ENCODE measurements at regions of chr15 and their contacts with region 1.

Region 1: GRCh38 chr15:52208306-52208946 is 17.2 kb upstream of the GNB5 start:
- DNase-seq: peak; percentile 64
- H3K27ac ChIP-seq: no peak overlapping the region
- CTCF ChIP-seq: peak; percentile 70

Region 2: GRCh38 chr15:51634591-51635198 is 573.7 kb before region 1 on chr15:
- CTCF ChIA-PET with region 1: no interaction called
- POLR2A ChIA-PET with region 1: no interaction called
- DNase-seq: no peak
- H3K27ac ChIP-seq: no peak overlapping the region
- CTCF ChIP-seq: no peak

Region 3: GRCh38 chr15:51955504-51956101 is 252.8 kb before region 1 on chr15:
- CTCF ChIA-PET with region 1: no interaction called
- POLR2A ChIA-PET with region 1: interaction called, 10 read pairs
- DNase-seq: no peak
- H3K27ac ChIP-seq: no peak overlapping the region
- CTCF ChIP-seq: no peak

Measured in RWPE1 (cell line).